Dendritic cell treated with granulocyte-macrophage colony-stimulating factor and Interleukin-4, amounts not matched to agents 40 ng/mL and 50 ng/mL, for 4 days (primary cell): ENCODE measurements at regions of chr16 and their contacts with region 1.

Region 1: GRCh38 chr16:27235055-27235937 is 32.0 kb downstream of the KDM8 start:
- H3K4me3 Mint-ChIP-seq: no peak overlapping the region
- H3K27ac Mint-ChIP-seq: peak overlapping the region; percentile 61
- H3K4me1 Mint-ChIP-seq: peaks cover 67% of the 10 kb centered on the region
- H3K27me3 Mint-ChIP-seq: no peaks in the 10 kb centered on the region

Region 2: GRCh38 chr16:27048315-27048714 is 187.0 kb before region 1 on chr16:
- intact Hi-C with region 1: no loop called
- H3K4me3 Mint-ChIP-seq: no peak overlapping the region
- H3K27ac Mint-ChIP-seq: no peak overlapping the region
- H3K4me1 Mint-ChIP-seq: no peaks in the 10 kb centered on the region
- H3K27me3 Mint-ChIP-seq: no peaks in the 10 kb centered on the region

Region 3: DNA sequence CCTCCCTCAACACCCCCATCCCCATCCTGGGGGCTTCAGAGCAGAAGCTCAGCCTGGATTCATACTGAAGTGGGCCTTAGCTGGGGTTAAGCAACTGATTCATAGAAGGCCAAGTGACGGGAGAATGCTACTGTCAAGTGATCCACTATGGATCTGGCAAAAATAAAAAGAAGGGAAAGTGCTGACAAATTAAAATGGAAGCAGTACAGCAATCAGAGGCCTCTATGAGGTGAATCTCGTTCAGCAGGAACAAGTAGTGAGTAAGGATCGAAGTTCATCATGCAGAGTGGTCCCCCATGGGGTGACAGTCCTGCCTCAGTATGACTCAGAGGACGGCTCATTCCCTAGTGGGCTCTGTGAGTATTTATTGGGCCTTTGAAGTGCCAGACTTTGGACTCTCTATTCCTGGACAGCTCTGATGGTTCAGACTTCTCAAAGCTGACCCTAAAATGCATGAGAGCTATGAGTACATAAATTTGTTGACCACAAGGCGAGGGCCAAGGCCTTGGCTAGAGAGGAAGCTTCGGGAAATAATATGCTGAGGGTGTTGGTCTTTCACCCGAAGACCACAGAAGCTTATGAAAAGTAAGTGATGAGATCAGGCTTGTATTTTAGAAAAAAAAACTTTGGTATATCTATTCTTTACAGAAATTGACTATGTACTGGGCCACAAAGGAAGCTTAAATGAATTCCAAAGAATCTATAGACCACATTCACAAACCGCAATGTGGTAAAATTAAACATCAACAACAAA is 38.6 kb after region 1 on chr16:
- intact Hi-C with region 1: loop called (anchors 5 kb)
- H3K4me3 Mint-ChIP-seq: no peak overlapping the region
- H3K27ac Mint-ChIP-seq: peak overlapping the region; percentile 11
- H3K4me1 Mint-ChIP-seq: peaks cover 45% of the 10 kb centered on the region
- H3K27me3 Mint-ChIP-seq: no peaks in the 10 kb centered on the region

Region 4: GRCh38 chr16:27313422-27314160 is 78.3 kb after region 1 on chr16 and contains the start of gene IL4R:
- intact Hi-C with region 1: loop called (anchors 10 kb)
- H3K4me3 Mint-ChIP-seq: peak within 1 kb of the TSS; percentile 79
- H3K27ac Mint-ChIP-seq: peak within 1 kb of the TSS; percentile 95
- H3K4me1 Mint-ChIP-seq: peaks cover 63% of the 10 kb centered on the region
- H3K27me3 Mint-ChIP-seq: peaks cover 8% of the 10 kb centered on the region

Region 5: DNA sequence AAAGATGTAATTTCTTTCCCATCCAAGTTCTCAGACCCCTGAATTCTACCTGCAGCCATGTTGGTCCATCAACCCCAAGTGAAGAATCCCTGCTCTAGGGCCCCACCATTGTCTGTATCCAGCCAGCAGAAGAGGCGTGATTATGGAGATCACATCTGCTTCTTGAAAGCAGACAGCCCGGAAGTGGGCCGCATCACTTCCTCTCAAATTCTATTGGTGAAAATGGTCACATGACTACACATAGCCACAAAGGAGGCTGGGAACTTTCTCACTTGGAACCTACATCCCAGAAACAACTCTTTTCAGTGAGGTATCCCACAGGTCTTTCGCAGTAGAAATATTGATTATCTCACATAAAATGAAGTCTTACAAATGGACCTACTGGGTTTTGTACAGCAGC is 118.6 kb after region 1 on chr16:
- intact Hi-C with region 1: loop called (anchors 5 kb)
- H3K4me3 Mint-ChIP-seq: no peak overlapping the region
- H3K27ac Mint-ChIP-seq: no peak overlapping the region
- H3K4me1 Mint-ChIP-seq: peaks cover 19% of the 10 kb centered on the region
- H3K27me3 Mint-ChIP-seq: no peaks in the 10 kb centered on the region

Region 6: GRCh38 chr16:27367461-27368357 is 132.4 kb after region 1 on chr16:
- intact Hi-C with region 1: loop called (anchors 1 kb)
- H3K4me3 Mint-ChIP-seq: peak overlapping the region; percentile 62
- H3K27ac Mint-ChIP-seq: peak overlapping the region; percentile 82
- H3K4me1 Mint-ChIP-seq: peaks cover 53% of the 10 kb centered on the region
- H3K27me3 Mint-ChIP-seq: no peaks in the 10 kb centered on the region

Region 7: DNA sequence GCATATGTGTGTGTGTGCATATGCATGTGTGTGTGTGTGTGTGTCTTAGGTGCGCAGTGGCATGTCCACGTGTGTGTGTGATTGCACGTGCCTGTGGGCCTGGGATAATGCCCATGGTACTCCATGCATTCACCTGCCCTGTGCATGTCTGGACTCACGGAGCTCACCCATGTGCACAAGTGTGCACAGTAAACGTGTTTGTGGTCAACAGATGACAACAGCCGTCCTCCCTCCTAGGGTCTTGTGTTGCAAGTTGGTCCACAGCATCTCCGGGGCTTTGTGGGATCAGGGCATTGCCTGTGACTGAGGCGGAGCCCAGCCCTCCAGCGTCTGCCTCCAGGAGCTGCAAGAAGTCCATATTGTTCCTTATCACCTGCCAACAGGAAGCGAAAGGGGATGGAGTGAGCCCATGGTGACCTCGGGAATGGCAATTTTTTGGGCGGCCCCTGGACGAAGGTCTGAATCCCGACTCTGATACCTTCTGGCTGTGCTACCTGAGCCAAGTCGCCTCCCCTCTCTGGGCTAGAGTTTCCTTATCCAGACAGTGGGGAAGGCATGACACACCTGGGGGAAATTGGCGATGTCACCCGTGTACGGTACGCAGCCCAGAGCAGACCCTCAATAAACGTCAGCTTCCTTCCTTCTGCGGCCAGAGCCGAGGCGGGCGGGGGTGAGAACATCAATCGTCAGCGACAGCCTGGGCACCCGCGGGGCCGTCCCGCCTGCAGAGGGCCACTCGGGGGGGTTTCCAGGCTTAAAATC is 214.3 kb after region 1 on chr16:
- intact Hi-C with region 1: loop called (anchors 10 kb)
- H3K4me3 Mint-ChIP-seq: no peak overlapping the region
- H3K27ac Mint-ChIP-seq: no peak overlapping the region
- H3K4me1 Mint-ChIP-seq: peaks cover 19% of the 10 kb centered on the region
- H3K27me3 Mint-ChIP-seq: peaks cover 57% of the 10 kb centered on the region